Gastrocnemius medialis (tissue), 4 donors: ENCODE measurements at regions of chr15 and their contacts with region 1.

Region 1: GRCh38 chr15:25508369-25509002 is 69.7 kb upstream of the UBE3A start:
- DNase-seq: no peak
- ATAC-seq: peak in 1 of 2 donors; percentile 50
- H3K4me3 ChIP-seq: no peak overlapping the region
- H3K27ac ChIP-seq: no peak overlapping the region
- H3K4me1 ChIP-seq: no peaks in the 10 kb centered on the region
- H3K27me3 ChIP-seq: no peaks in the 10 kb centered on the region
- CTCF ChIP-seq: peak; percentile 64 to 78 (median 65)
- POLR2A ChIP-seq: no peak

Region 2: DNA sequence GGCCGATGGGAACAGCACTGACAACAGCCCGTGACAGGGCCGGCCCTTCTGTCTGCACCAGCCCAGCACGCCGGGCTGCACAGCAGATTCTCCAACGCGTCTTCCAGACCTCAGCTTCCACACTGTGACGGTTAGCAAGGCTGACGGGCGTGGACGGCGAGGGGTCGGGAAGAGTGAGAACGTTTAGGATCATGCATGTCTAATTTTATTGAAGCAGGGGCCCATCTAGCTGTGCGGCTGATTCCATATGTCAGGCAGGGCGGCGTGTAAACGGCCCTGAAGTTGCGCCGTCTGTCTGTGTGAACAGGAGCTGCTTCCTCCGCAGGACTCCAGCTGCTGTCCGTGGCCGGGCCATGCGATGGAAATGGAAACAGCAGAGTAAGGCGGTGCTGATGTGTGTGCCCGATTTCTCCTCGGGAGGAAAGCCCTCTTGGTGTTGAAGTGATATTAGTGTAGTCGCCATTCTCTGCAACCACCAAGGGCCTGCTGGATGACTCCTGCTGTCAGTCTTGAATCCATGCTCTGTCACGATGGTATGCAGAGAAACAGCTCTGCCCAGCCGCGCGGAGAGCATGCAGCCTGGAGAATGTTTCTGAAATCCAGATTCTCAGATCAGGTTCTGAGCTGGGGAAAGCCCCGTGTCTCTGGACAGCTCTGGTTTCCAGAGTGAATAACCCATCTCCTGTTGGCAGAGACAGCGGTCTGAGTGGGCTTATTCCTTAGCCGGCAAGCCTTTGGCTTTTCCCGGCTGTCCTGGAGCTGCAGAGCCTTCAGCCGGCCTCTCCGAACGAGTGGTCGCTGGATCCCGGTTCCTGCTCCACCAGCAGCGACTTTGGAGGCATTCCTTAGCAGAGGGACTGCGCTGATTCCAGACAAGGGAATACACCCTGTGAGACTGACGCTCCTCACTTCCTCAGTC is 88.4 kb after region 1 on chr15:
- in situ Hi-C with region 1: no loop called
- intact Hi-C with region 1: loop called (anchors 10 kb)
- DNase-seq: no peak
- ATAC-seq: peak; percentile 58 to 75
- H3K4me3 ChIP-seq: peak overlapping the region; percentile 45 to 53 (median 46)
- H3K27ac ChIP-seq: peak overlapping the region in 1 of 4 donors; percentile 11
- H3K4me1 ChIP-seq: peaks cover 0 to 6% of the 10 kb centered on the region in 2 donors
- H3K27me3 ChIP-seq: no peaks in the 10 kb centered on the region
- CTCF ChIP-seq: peak in 1 of 5 experiments; percentile 26
- POLR2A ChIP-seq: no peak

Region 3: GRCh38 chr15:25710184-25710583 is 201.7 kb after region 1 on chr15:
- in situ Hi-C with region 1: loop called in 1 of 4 experiments (anchors 25 kb)
- intact Hi-C with region 1: loop called (anchors 2 kb)
- DNase-seq: peak in 1 of 2 donors; percentile 33
- ATAC-seq: peak; percentile 36 to 75
- H3K4me3 ChIP-seq: no peak overlapping the region
- H3K27ac ChIP-seq: no peak overlapping the region
- H3K4me1 ChIP-seq: no peaks in the 10 kb centered on the region
- H3K27me3 ChIP-seq: no peaks in the 10 kb centered on the region
- CTCF ChIP-seq: peak; percentile 39 to 75 (median 61)
- POLR2A ChIP-seq: no peak

Region 4: DNA sequence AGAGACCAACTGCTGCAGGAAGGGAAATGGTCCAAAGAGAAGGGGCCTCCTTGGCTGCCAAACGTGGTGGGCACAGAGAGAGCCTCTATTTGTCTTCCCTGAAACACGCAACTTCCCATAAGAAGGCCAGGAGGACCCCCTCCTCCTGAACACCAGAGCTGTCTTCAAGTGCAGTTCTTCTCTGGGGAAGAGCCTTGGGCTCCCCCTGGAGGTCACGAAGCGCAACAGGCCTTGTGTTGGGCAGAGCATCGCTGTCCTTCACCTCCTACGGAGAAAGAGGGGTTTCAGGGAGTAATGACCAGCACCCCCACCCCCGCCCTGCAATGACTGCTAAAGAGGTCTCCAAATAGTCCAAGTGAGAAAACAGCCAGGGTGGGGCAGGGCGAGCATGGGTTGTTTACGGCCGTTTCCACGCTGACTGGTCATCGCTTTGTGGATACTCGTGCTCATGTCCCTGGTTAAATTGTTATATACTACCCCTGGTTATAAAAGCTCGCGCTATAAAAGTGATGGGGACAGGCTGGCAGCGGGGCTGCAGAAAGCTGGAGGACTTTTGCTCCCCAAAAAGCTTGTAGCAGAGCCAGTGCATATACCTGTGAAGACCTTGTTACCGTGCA is 752.1 kb after region 1 on chr15:
- in situ Hi-C with region 1: loop called in 1 of 4 experiments (anchors 25 kb)
- intact Hi-C with region 1: no loop called
- DNase-seq: no peak
- ATAC-seq: no peak
- H3K4me3 ChIP-seq: no peak overlapping the region
- H3K27ac ChIP-seq: no peak overlapping the region
- H3K4me1 ChIP-seq: no peaks in the 10 kb centered on the region
- H3K27me3 ChIP-seq: no peaks in the 10 kb centered on the region
- CTCF ChIP-seq: peak in 3 of 5 experiments; percentile 27 to 50 (median 33)
- POLR2A ChIP-seq: no peak

Region 5: DNA sequence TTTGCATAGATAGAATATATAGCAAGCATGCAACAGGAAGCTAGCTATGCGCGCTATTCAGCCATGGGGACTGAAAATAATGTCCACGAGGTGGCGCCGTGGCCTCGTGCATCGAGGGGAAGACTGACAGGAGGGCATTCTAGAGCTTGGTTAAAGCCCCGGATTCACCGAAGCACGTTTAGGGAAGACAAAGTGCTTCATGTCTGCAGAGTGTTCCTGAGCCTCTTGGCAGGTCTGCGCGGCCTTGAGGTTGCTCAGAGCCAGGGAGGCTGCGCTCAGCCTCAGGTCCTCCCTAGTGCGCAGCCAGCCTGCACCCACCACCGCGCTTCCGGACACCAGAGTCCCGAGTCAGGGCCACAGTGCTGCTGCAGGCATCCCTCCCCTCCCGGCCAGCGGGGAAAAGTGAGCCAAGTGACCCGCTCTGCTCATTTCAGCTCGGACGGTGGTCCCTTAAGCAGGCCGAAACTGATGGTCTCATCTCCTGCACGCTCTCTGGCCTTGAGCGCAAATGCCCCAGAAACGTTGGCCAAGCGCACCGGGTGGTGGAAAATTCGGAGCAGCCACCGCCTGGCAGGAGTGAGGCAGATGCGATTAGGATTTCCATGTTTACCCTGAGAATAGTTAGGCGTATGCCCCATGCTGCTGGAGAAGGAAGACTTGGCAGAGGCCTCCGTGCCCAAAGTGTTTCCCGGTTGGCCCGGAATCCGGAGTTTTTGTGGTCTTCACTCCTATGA is 1383.1 kb after region 1 on chr15:
- in situ Hi-C with region 1: loop called in 1 of 4 experiments (anchors 25 kb)
- intact Hi-C with region 1: no loop called
- DNase-seq: no peak
- ATAC-seq: no peak
- H3K4me3 ChIP-seq: no peak overlapping the region
- H3K27ac ChIP-seq: no peak overlapping the region
- H3K4me1 ChIP-seq: no peaks in the 10 kb centered on the region
- H3K27me3 ChIP-seq: peaks cover 0 to 10% (median 2%) of the 10 kb centered on the region in 3 donors
- CTCF ChIP-seq: peak in 1 of 5 experiments; percentile 14
- POLR2A ChIP-seq: no peak